ENCODE measurements at regions of chr10 and their contacts with region 1.

Region 1: GRCh38 chr10:113126229-113127201 is 176.5 kb downstream of the TCF7L2 start:
- DNase-seq: peak; percentile 80
- ATAC-seq: peak; percentile 97 to 98

Region 2: DNA sequence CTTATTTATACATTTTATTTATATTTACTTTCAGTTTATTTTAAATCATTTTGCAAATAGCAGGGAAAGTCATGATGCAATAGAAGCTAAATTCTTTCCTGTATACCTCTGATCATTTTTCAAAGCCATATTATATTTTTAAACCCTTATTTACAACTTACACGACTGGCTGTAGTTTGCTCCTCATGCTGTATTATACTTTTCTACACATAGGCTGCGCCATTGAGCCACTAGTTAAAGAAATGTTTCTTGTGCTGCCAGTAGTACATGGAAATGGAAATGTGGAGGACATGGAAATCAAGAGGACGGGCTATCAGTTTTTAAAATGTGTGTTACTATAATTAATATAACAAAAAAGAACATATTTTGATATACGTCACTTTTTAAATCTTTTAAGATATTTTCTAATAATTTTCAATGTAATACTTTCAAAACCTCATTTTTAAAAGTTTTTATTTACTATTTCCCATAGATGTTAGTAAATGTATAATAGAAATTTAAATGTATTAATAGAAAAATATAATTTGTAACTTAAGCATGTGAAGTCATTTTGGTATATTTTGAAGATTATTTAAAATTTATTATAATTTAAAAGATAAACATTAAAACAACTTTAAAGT is 561.0 kb before region 1 on chr10:
- intact Hi-C with region 1: no loop called
- DNase-seq: no peak
- ATAC-seq: peak; percentile 41 to 55

Region 3: DNA sequence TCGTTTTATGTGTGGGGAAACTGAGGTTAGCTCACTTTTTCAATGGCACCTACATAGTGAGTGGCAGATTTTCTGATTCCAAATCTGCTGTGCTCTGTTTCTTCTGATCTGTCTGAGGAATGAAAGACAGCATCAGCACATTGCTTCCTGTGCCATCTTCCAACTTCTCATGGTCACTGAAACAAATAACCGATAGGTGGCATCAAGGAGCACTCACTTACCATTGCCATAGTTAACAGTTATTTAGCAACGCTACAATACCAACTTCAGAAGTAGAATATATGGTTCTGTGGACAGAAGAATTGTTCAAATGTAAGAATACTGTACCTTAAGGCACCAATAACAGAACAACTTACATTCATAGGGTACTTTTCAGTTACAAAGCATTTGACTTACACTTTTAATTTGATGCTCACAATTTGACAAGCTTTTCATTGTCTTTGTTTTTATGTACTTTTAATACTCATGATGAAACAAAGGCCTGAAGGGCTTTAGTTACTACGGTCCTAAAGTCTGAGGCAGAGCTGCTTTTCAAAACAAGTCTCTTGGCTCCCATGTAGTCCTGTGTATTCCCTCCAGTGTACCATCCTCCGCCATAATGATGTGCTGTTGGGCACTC is 405.3 kb before region 1 on chr10:
- intact Hi-C with region 1: loop called (anchors 5 to 10 kb)
- DNase-seq: no peak
- ATAC-seq: peak; percentile 53 to 68

Measured in left cardiac atrium (tissue), 4 donors.